AG04450 (cell line): ENCODE measurements at regions of chr7 and their contacts with region 1.

Region 1: DNA sequence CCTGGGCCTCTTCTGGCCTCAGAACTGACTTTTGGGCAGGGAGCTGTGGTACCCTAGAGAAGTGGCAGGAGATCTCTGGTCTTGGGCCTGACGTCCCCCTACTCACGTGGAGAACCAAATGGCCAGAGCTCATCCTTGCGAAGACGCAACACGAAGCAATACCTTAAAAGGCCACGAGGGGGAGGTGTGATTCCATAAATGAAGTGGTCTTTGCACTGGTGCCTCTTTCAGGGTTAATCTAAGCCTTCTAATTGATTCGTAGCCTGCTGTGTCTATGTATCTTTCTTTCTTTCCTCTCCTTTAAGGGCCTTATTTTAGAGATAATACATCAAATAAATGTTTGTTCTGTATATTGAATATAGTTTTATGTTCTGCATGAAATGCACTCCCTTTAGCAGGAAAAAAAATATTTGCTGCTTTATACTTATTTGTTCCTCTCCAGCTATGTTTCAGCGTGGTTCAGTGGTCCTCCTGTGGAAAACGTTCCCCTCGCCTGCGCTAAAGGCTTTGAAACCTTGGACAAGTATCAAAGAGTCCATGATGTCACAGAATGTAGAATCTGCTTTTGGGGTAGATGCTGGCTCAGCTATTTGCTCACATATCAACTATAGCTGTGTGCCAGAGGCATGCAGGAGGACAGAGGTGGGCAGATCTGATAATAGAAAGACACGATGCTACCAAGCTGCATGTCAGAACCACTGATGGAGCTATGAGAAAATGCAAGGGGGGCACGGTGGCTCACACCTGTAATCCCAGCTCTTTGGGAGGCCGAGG is 41.0 kb downstream of the STRA8 start:
- DNase-seq: peak; percentile 48
- H3K4me3 ChIP-seq: no peak overlapping the region
- H3K27ac ChIP-seq: no peak overlapping the region
- H3K27me3 ChIP-seq: peaks cover 10% of the 10 kb centered on the region
- CTCF ChIP-seq: peak; percentile 81

Region 2: DNA sequence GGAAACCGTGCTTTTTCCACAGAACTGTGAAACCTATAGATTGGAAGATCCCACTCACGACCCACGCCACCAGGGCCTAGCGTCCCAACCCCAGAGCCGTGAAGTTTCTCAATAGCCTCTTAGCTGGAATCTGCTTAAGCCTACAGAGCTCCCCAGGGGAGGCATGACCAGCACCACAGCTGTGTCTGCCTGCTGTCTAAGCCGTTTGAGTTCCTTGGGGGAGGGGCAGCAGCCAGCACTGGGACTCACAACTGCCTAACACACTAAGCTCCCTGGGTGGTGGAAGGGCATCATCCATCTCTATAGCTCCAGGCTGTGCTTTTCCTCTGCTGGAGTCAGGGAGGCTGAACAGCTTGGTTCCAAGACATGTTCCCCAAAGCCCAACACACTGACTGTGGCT is 152.8 kb before region 1 on chr7:
- CTCF ChIA-PET with region 1: no interaction called
- POLR2A ChIA-PET with region 1: no interaction called
- DNase-seq: no peak
- H3K4me3 ChIP-seq: no peak overlapping the region
- H3K27ac ChIP-seq: no peak overlapping the region
- H3K27me3 ChIP-seq: no peaks in the 10 kb centered on the region
- CTCF ChIP-seq: no peak

Region 3: DNA sequence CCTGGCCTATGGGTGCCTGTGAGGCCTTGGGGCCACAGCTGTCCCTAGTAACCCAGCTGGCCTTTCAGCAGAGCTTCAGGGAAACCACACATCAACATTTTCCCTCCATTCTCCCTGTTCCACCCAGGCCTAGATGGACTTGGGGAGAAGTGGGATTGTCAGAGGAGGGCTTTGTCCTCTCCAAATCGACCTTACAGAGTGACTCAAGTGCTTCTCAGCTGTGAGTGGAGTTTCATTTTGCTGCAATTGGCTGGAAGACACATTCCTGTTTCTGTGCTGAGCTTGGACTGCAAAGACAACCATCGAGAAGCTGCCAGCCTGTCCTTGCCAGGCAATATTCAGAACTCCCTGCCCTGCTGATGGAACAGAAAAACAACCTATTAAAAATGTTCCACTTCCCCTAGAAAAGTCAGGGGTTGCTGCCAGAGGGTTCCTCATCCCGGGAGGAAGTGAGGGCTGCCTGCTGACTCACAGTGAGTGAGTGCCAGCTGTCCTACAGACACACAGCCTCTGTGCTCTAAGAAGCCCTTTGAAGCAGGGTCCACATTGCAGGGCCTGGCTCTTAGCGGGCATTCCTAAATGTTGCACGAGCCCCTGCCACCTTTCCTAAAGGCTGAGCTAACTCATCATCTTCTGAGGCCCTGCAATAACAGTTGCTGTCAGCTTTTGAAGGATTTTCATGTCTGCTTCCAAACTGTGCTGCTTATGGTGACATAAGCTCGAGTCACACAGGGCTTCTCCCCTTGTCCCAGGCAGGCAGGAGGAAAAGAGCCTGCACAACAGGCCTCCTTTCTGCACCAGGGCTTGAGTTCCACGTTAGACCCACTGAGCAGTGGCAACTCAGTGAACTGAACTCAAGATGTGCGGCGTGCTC is 20.5 kb before region 1 on chr7:
- CTCF ChIA-PET with region 1: interaction called, 15 read pairs
- POLR2A ChIA-PET with region 1: no interaction called
- DNase-seq: peak; percentile 11
- H3K4me3 ChIP-seq: no peak overlapping the region
- H3K27ac ChIP-seq: peak overlapping the region; percentile 83
- H3K27me3 ChIP-seq: no peaks in the 10 kb centered on the region
- CTCF ChIP-seq: no peak

Region 4: DNA sequence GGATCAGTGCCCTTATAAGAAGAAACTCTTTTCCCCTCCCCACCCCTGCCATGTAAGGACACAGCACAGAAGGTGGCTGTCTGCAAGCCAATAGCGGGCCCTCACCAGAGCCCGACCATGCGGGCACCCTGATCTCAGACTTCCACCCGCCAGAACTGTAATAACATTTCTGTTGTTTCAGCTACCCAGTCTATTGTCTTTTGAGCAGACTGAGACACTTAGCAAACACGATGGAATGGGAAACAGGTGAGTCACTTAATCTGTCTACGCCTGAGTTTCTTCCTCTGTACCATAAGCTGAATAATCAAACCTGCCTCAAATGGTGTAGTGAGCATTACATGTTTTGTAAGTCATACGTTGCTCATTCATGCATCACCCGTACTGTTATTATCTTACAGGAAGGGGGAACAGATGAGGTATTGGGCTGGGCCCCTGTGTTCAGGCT is 17.1 kb after region 1 on chr7:
- CTCF ChIA-PET with region 1: interaction called, 14 read pairs
- POLR2A ChIA-PET with region 1: no interaction called
- DNase-seq: peak; percentile 18
- H3K4me3 ChIP-seq: no peak overlapping the region
- H3K27ac ChIP-seq: no peak overlapping the region
- H3K27me3 ChIP-seq: no peaks in the 10 kb centered on the region
- CTCF ChIP-seq: no peak

Region 5: GRCh38 chr7:135602304-135602703 is 327.6 kb after region 1 on chr7:
- CTCF ChIA-PET with region 1: interaction called, 10 read pairs
- POLR2A ChIA-PET with region 1: no interaction called
- DNase-seq: no peak
- H3K4me3 ChIP-seq: no peak overlapping the region
- H3K27ac ChIP-seq: no peak overlapping the region
- H3K27me3 ChIP-seq: no peaks in the 10 kb centered on the region
- CTCF ChIP-seq: no peak

Region 6: GRCh38 chr7:135620980-135621850 is 346.5 kb after region 1 on chr7:
- CTCF ChIA-PET with region 1: interaction called, 13 read pairs
- POLR2A ChIA-PET with region 1: no interaction called
- DNase-seq: peak; percentile 75
- H3K4me3 ChIP-seq: no peak overlapping the region
- H3K27ac ChIP-seq: no peak overlapping the region
- H3K27me3 ChIP-seq: no peaks in the 10 kb centered on the region
- CTCF ChIP-seq: peak; percentile 89

Region 7: DNA sequence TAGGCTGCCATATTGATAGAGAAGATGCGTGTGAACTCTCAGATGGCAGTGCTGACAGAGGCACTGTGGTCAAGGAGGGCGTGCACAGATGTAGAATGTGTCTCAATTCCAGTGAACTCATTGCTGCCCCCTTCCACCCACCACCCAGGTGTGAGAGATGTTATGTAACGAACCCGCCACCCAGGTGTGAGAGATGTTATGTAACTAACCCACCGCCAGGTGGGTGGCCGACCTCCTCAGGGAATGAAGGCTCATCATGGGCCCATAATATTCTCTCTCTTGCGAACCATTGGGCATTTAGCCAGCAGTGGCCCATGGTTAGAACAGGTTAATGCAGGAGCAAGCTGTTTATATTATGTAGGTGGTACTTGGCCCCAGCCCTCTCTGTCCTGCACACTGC is 842.9 kb after region 1 on chr7:
- CTCF ChIA-PET with region 1: no interaction called
- POLR2A ChIA-PET with region 1: no interaction called
- DNase-seq: no peak
- H3K4me3 ChIP-seq: no peak overlapping the region
- H3K27ac ChIP-seq: no peak overlapping the region
- H3K27me3 ChIP-seq: no peaks in the 10 kb centered on the region
- CTCF ChIP-seq: no peak